CD14-positive monocyte (primary cell): ENCODE measurements at regions of chr17 and their contacts with region 1.

Region 1: GRCh38 chr17:44503147-44504029 is at the start of gene GPATCH8:
- DNase-seq: peak; percentile 92 to 96 (median 95)
- H3K4me3 ChIP-seq: peak within 1 kb of the TSS; percentile 61 to 93 (median 84)
- H3K4me3 Mint-ChIP-seq: peak within 1 kb of the TSS; percentile 98 to 99
- H3K27ac ChIP-seq: peak within 1 kb of the TSS; percentile 86 to 90
- H3K27ac Mint-ChIP-seq: peak within 1 kb of the TSS; percentile 94 to 99 (median 98)
- H3K4me1 ChIP-seq: peaks cover 22 to 38% of the 10 kb centered on the region in 2 donors
- H3K4me1 Mint-ChIP-seq: peaks cover 37% of the 10 kb centered on the region
- H3K27me3 ChIP-seq: no peaks in the 10 kb centered on the region
- H3K27me3 Mint-ChIP-seq: peaks cover 0 to 2% (median 0%) of the 10 kb centered on the region in 3 donors
- CTCF ChIP-seq: no peak
- polyA plus RNA-seq, gene GPATCH8: 8.8 to 15.9 (median 14.9) TPM

Region 2: DNA sequence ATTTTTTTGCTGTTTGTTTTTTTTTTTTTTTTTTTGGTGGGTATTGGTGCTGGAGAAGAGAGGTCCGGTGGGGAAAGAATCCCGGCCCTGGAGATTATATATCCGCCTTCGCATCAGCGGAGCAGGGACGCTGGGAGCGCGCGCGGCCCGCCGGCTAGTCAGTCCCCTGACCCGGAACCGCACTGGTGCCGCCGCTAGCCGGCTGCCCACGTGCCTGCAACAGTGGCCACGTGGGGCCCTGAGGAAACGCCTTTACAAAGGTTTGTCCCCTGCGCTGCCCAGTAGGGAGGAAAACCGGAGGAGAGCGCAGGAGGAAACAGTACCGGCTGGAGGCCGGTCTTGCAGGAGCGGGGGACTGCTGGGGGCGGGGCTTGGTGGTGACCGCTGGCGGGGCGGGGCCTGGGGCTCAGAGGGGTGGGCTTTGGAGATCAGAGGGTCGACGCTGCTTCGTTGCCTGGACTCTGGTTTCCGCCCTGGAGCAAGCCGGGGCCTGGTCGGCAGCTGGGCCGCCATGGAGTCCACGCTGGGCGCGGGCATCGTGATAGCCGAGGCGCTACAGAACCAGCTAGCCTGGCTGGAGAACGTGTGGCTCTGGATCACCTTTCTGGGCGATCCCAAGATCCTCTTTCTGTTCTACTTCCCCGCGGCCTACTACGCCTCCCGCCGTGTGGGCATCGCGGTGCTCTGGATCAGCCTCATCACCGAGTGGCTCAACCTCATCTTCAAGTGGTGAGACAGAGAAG is 432.8 kb before region 1 on chr17 and contains the start of gene G6PC3:
- intact Hi-C with region 1: loop called in 1 of 2 experiments (anchors 5 kb)
- DNase-seq: peak; percentile 87 to 92 (median 89)
- H3K4me3 ChIP-seq: peak within 1 kb of the TSS; percentile 45 to 84 (median 65)
- H3K4me3 Mint-ChIP-seq: peak within 1 kb of the TSS; percentile 89 to 94
- H3K27ac ChIP-seq: peak within 1 kb of the TSS; percentile 86
- H3K27ac Mint-ChIP-seq: peak within 1 kb of the TSS; percentile 87 to 97 (median 94)
- H3K4me1 ChIP-seq: peaks cover 46 to 56% of the 10 kb centered on the region in 2 donors
- H3K4me1 Mint-ChIP-seq: peaks cover 49% of the 10 kb centered on the region
- H3K27me3 ChIP-seq: no peaks in the 10 kb centered on the region
- H3K27me3 Mint-ChIP-seq: peaks cover 0 to 1% (median 0%) of the 10 kb centered on the region in 3 donors
- CTCF ChIP-seq: no peak
- polyA plus RNA-seq, gene G6PC3: 38.0 to 46.4 (median 42.4) TPM

Region 3: DNA sequence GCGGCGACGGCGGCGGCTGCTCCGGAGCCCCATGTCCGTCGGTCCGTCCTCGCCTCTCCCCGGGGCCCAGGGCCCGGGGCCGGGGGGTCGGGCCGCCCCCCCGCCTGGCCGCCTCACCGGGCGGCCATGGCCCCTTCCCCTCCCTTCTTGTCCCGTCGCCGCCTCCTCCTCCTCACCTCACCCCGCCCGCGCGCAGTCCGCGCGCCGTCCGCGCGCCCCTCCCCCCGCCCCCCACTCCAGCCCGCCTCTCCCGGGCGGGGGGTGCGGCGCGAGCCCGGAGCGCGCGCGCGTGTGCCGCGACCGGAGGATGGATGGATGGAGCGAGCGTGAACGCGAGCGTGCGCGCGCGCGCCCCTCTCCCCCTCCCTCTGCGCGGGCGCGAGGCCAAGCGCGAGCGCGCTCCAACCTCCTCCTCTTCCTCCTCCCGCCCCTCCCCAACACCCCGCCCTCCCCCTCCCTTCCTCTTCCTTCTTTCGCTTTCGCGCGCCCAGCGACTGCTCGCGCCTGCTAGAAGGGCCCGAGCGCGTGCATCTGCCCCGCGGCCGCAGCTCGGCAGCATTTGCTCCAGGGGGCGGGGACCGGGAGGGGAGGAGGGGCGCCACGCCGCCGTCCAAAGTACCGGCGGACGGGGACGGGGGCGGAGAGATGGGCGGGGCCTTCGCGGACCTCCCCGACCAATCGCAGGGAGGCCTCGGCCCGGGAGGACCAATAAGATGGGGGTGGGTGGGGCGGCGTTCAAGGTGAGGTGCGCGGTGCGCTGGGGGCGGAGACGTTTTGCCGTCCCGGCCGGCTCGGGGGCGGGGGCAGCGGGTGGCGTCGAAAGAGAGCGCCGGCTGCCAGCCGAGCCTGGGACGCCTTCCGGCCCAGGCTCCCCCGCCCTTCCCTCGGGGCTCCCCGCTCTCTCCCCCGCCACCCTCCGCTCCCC is 303.6 kb before region 1 on chr17 and contains the start of gene ATXN7L3:
- intact Hi-C with region 1: loop called in 1 of 2 experiments (anchors 5 kb)
- DNase-seq: peak; percentile 94 to 98 (median 96)
- H3K4me3 ChIP-seq: peak within 1 kb of the TSS; percentile 94 to 97 (median 97)
- H3K4me3 Mint-ChIP-seq: peak within 1 kb of the TSS; percentile 91 to 92
- H3K27ac ChIP-seq: peak within 1 kb of the TSS; percentile 94
- H3K27ac Mint-ChIP-seq: peak within 1 kb of the TSS; percentile 92 to 98 (median 95)
- H3K4me1 ChIP-seq: peaks cover 48 to 51% of the 10 kb centered on the region in 2 donors
- H3K4me1 Mint-ChIP-seq: peaks cover 53% of the 10 kb centered on the region
- H3K27me3 ChIP-seq: no peaks in the 10 kb centered on the region
- H3K27me3 Mint-ChIP-seq: peaks cover 0 to 2% (median 0%) of the 10 kb centered on the region in 3 donors
- CTCF ChIP-seq: no peak
- polyA plus RNA-seq, gene ATXN7L3: 8.5 to 60.9 (median 9.9) TPM